ENCODE measurements at regions of chr3 and their contacts with region 1.

Region 1: DNA sequence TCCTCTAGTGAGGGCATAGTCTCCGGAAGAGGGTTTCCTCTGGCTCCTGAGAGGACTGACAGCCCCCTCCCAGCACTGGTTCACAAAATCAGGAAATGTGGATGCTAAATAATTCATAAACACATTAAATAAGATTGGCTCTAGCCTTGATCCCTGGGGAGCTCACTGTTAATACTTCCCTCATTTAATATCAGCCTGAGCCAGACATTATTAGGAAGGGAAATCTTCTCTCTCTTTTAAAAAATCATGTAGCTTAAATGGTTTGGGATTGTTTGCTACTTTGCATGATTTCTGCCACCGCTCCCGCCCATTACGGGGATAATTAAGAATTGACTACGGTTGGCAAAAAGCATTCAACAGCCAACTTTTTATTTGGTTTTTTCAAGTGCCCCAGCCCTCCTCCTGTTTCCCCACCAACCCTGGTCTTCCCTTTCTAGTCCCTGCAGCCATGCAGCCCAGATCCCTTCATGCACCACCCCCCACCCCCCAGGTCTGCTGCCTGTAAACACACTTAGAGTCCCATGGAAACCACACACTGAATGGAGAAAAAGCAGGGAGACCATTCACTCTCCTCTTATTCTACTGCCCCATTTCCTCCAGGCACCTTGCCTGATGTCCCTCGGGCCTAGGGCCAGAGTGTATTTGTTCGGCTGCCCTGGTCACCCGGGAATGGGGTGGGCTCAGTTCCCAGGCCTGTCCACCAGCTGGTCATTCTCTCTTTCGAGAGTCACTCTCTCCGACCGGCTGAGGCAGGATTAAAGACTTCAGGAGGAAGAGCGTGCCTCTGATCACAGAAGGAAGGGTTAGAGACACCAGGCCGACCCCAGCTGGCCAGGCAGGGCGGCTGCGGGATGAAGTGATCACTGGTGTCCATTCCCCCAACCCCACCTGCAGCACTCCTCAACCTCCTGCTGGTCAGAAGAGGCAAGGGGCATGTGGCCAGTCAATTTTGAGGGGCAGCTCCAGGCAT is 45.1 kb downstream of the SEMA5B start:
- DNase-seq: no peak

Region 2: DNA sequence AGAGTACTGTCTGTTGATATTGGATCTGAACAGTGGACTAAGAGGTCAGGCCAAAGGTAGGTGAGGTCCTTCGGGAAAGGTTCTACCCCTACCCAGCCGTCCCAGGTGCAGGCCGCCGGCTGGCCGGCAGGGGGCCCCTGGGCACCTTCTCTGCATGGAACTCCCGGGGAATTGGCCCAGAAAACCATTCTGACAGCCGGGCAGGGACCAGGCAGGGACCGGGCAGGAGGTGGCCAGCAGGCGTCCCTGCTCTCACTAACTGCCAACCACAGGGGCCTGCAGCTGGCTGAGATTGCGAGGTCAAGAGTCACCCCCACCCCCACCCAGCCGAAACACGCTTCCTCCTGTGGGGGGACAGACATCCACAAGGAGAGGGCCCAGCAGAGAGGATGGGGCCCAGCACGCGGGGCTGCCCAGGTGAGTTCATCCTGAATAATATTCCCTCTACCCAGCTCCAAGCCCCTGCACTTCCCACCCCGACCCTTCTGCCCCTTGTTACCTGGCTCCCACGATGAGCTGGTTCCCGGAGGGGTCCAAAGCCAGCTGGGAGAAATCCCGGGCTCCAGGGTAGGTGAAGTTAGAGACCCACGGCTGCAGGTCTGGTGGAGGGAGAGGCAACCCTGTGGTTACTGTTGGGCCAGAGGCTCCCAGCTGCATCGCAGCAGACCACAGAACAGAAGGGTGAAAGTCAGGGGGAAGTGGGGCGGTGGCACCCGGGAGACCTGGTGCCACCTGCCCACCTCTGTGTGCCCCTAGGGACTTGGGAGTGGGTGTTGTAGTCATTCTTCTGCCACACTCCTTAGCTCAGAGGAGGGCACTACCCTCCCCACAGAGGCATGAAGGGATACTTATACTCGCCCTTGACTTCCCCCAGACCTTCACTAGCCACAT is 39.3 kb before region 1 on chr3:
- intact Hi-C with region 1: loop called in 1 of 2 experiments (anchors 5 kb)
- DNase-seq: peak; percentile 83